Activated CD4-positive, alpha-beta T cell treated with anti-CD3 and anti-CD28 coated beads, Interleukin-2, amount 10 ng/mL, durations not matched to agents 24 days and 14 days (primary cell): ENCODE measurements at regions of chr6 and their contacts with region 1.

Region 1: GRCh38 chr6:6008648-6009421 is 2.1 kb upstream of the NRN1 start:
- DNase-seq: peak; percentile 89
- H3K4me3 Mint-ChIP-seq: peak overlapping the region; percentile 74
- H3K27ac Mint-ChIP-seq: peak overlapping the region; percentile 73
- H3K4me1 Mint-ChIP-seq: peaks cover 36% of the 10 kb centered on the region
- H3K27me3 Mint-ChIP-seq: peaks cover 74% of the 10 kb centered on the region

Region 2: GRCh38 chr6:5085193-5085647 is 923.6 kb before region 1 on chr6 and contains the start of gene PPP1R3G:
- intact Hi-C with region 1: loop called (anchors 10 kb)
- DNase-seq: peak; percentile 72
- H3K4me3 Mint-ChIP-seq: peak within 1 kb of the TSS; percentile 85
- H3K27ac Mint-ChIP-seq: no peak within 1 kb of the TSS
- H3K4me1 Mint-ChIP-seq: peaks cover 5% of the 10 kb centered on the region
- H3K27me3 Mint-ChIP-seq: peaks cover 55% of the 10 kb centered on the region
- total RNA-seq, gene PPP1R3G: 0.05 TPM in 2 replicates

Region 3: GRCh38 chr6:5981126-5982026 is 27.5 kb before region 1 on chr6:
- intact Hi-C with region 1: loop called (anchors 1 kb)
- DNase-seq: peak; percentile 63
- H3K4me3 Mint-ChIP-seq: no peak overlapping the region
- H3K27ac Mint-ChIP-seq: peak overlapping the region; percentile 21
- H3K4me1 Mint-ChIP-seq: peaks cover 40% of the 10 kb centered on the region
- H3K27me3 Mint-ChIP-seq: peaks cover 14% of the 10 kb centered on the region

Region 4: GRCh38 chr6:5995949-5996713 is 12.7 kb before region 1 on chr6:
- intact Hi-C with region 1: loop called (anchors 1 kb)
- DNase-seq: peak; percentile 72
- H3K4me3 Mint-ChIP-seq: peak overlapping the region; percentile 88
- H3K27ac Mint-ChIP-seq: peak overlapping the region; percentile 45
- H3K4me1 Mint-ChIP-seq: peaks cover 45% of the 10 kb centered on the region
- H3K27me3 Mint-ChIP-seq: peaks cover 85% of the 10 kb centered on the region

Region 5: GRCh38 chr6:6024220-6024619 is 15.4 kb after region 1 on chr6:
- intact Hi-C with region 1: no loop called
- DNase-seq: no peak
- H3K4me3 Mint-ChIP-seq: no peak overlapping the region
- H3K27ac Mint-ChIP-seq: no peak overlapping the region
- H3K4me1 Mint-ChIP-seq: no peaks in the 10 kb centered on the region
- H3K27me3 Mint-ChIP-seq: peaks cover 20% of the 10 kb centered on the region

Region 6: DNA sequence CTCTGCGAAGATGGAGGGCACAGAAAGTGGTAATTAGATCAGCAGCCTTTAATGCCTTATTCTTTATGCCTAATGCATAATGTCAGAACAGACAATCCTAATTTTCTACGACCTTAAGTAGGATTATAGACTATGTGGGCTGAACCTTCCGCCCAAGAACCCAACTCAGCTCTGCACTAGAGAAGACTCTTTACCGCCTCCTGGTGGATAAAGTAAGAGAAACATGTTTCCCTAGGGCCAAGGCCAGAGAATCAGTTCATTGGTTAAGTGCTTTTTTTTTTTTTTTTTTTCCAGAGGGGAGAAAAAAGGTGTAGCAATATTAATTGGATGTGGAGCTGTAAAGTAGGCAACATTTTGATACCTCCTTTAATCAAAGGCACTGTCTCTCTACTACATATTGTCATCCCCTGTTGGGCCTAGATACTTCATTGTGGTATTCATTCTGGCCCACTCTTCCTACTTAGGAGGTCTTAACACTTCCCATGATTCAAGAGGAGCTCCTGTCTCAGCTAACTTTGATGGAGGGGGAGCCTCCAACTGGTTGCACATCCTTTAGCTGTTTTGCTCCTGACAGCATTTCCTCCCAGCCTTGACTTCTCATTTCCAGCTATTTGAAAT is 122.8 kb after region 1 on chr6:
- intact Hi-C with region 1: no loop called
- DNase-seq: peak; percentile 69
- H3K4me3 Mint-ChIP-seq: no peak overlapping the region
- H3K27ac Mint-ChIP-seq: no peak overlapping the region
- H3K4me1 Mint-ChIP-seq: no peaks in the 10 kb centered on the region
- H3K27me3 Mint-ChIP-seq: no peaks in the 10 kb centered on the region

Region 7: GRCh38 chr6:6547110-6547879 is 538.5 kb after region 1 on chr6:
- intact Hi-C with region 1: loop called (anchors 5 kb)
- DNase-seq: peak; percentile 95
- H3K4me3 Mint-ChIP-seq: peak overlapping the region; percentile 75
- H3K27ac Mint-ChIP-seq: peak overlapping the region; percentile 7
- H3K4me1 Mint-ChIP-seq: peaks cover 11% of the 10 kb centered on the region
- H3K27me3 Mint-ChIP-seq: peaks cover 68% of the 10 kb centered on the region